ENCODE measurements at regions of chr12 and their contacts with region 1.

Region 1: DNA sequence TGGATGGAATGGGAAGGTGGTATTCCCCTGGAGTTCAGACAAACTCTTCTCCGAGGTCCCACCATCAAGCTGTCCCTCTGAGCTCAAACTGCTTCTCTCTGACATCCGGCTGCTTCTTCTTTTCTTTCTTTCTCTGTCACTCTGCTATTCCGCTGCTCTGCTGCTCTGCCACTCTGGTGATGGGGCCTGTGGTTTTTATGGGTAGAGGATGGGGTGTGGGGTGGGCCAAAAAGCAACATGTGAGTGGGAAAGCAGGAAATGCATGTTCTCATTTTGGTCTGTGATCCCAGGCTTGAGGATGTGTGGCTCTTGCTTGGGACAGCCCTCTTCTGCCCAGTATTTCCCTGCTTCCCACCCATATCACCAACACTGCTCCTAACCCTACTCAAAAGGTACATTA is 30.6 kb downstream of the CLECL1 start:
- DNase-seq: no peak
- ATAC-seq: no peak

Region 2: DNA sequence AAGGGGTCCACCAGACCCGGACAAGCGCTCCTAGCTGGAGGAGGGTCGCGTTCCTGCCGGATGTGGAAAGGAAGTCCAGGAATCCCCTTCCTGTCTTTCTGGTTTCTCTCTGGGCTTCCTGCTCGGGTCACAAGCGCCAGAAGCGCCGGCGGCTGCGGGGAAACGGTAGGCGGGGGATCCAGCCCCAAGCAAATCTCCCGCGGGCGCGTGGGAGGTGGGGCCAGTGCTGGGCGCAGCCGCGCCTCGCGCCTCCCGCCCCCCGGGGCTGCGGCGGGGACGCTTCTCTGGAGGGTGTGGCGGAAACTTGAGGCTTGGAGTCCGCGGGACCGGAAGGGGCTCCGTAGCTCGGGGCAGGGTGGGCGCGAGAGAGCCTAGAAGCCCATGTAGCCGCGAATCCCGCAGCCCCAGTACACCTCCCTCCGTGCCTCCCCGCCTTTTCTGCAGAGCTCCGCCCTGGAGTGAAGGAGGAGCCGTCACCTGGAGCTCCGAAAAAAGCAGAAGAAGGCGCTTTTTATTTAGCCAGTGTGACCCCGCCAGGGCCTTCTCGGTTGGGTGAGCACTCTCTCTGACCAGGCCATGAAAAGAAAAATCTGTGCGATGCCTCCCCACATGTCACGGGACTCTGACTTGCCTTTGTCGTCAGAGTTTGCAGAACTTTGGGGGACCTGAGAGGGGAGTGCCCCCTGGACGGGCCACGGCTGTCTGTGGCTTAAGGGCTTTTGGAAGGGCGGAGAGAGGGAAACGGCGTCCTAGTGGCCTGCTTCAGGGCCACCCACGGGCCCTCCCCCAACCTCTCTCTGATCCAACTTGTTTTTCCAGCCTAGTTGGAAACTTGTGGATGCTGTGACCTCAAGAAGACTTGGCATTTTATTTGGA is 54.2 kb before region 1 on chr12:
- intact Hi-C with region 1: loop called (anchors 5 kb)
- DNase-seq: peak; percentile 90
- ATAC-seq: peak; percentile 96

Region 3: DNA sequence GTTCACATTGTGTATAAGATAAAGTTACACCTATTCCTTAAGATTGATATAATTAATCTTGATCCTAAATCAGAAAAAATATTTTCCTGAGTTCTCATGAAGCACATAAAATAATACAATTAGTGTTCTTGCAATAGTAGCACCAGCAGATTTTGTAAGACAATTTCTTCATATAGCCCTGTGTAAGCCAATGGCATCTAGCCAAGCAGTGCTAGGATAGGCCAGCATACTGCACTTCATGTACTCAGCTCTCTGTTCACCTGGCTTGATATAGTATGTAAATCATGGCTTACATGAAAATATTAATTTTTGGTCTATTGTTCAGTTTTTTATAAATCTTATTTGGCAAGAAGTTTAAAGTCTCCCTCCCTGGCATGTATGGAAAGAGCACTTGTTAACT is 180.9 kb after region 1 on chr12:
- intact Hi-C with region 1: no loop called
- DNase-seq: no peak
- ATAC-seq: no peak